ENCODE measurements at regions of chr3 and their contacts with region 1.

Region 1: GRCh38 chr3:132722164-132723024 is at the start of gene NPHP3:
- DNase-seq: peak; percentile 85
- H3K4me3 Mint-ChIP-seq: peak within 1 kb of the TSS; percentile 95
- H3K27ac Mint-ChIP-seq: peak within 1 kb of the TSS; percentile 91
- H3K4me1 Mint-ChIP-seq: peaks cover 36% of the 10 kb centered on the region
- H3K27me3 Mint-ChIP-seq: peaks cover 4% of the 10 kb centered on the region
- total RNA-seq, gene NPHP3: 14.4 and 17.0 TPM in 2 replicates

Region 2: DNA sequence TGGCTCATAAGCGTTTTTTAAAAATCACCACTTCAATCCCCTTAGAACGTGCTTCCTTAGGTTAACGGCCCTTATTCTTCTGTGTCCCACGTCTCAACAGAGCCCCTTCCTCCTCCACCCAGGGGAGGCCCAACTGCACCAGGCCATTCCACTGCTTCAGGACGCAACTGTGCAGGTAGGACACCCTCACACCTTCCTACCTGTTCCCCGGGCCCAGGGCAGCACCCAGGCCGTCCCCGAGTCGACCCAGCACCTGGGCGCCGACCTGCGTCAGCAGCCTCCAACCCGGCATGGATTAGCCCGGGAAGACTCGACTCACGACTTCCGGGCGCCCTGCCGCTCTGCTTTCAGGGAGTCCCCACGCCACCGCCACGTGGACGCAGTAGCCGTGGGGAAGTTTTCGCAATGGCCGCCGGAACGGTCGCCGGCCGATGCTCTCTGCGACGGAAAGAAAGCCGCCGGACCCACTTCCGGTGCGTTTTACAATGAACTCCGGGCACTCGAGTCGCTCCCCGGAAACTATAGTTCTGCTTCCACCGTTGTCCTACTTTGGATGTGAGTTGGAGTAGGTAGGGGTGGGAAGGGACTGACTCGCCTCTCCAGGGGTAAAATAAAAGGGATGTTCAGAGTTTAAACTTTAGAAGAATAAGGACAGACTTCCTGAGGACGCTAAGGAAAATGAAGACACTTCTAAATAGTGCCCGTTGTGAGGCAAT is 1219.7 kb before region 1 on chr3 and contains the start of gene MRPL3:
- intact Hi-C with region 1: loop called (anchors 2 kb)
- DNase-seq: peak; percentile 78
- H3K4me3 Mint-ChIP-seq: peak within 1 kb of the TSS; percentile 100
- H3K27ac Mint-ChIP-seq: peak within 1 kb of the TSS; percentile 95
- H3K4me1 Mint-ChIP-seq: peaks cover 50% of the 10 kb centered on the region
- H3K27me3 Mint-ChIP-seq: peaks cover 4% of the 10 kb centered on the region
- total RNA-seq, gene MRPL3: 166 and 175 TPM in 2 replicates

Region 3: DNA sequence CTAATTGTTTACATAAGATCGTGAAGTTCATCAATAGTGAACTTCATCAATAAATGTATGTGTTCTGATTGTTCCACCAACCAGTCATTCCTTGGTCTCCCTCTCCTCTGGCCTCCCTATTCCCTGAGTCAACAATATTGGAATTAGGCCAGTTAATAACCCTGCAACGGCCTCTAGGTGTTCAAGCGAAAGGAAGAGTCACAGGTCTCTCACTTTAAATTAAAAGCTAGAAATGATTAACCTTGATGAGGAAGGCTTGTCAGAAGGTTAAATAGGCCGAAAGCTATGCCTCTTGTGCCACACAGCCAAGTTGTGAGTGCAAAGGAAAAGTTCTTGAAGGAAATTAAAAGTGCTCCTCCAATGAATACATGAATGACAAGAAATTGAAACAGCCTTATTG is 214.7 kb before region 1 on chr3:
- intact Hi-C with region 1: no loop called
- DNase-seq: no peak
- H3K4me3 Mint-ChIP-seq: no peak overlapping the region
- H3K27ac Mint-ChIP-seq: no peak overlapping the region
- H3K4me1 Mint-ChIP-seq: no peaks in the 10 kb centered on the region
- H3K27me3 Mint-ChIP-seq: no peaks in the 10 kb centered on the region

Region 4: GRCh38 chr3:132535575-132536441 is 186.6 kb before region 1 on chr3:
- intact Hi-C with region 1: loop called (anchors 1 kb)
- DNase-seq: peak; percentile 17
- H3K4me3 Mint-ChIP-seq: no peak overlapping the region
- H3K27ac Mint-ChIP-seq: peak overlapping the region; percentile 86
- H3K4me1 Mint-ChIP-seq: peaks cover 22% of the 10 kb centered on the region
- H3K27me3 Mint-ChIP-seq: no peaks in the 10 kb centered on the region

Region 5: GRCh38 chr3:133211449-133211848 is 489.1 kb after region 1 on chr3:
- intact Hi-C with region 1: loop called (anchors 10 kb)
- DNase-seq: no peak
- H3K4me3 Mint-ChIP-seq: no peak overlapping the region
- H3K27ac Mint-ChIP-seq: no peak overlapping the region
- H3K4me1 Mint-ChIP-seq: peaks cover 21% of the 10 kb centered on the region
- H3K27me3 Mint-ChIP-seq: no peaks in the 10 kb centered on the region

Region 6: DNA sequence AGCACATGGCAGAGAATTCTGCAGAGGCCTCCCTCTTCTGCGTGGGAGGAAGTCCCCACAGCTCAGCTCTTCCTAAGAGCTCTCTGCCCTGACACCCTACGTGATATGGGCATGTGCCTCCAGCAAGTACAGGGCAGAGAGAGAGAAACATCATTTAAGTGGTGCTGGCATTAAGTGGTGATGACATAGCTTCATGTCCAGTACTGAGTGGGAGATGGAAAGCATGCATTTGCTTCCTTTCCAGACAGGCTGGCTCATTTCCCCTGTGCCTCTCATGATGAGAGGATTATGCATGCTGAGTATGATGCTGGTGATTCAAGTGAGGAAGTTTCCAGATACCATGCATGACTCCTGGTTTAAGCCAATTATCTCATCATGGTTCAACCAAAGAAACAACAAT is 704.3 kb after region 1 on chr3:
- intact Hi-C with region 1: loop called (anchors 1 kb)
- DNase-seq: no peak
- H3K4me3 Mint-ChIP-seq: no peak overlapping the region
- H3K27ac Mint-ChIP-seq: no peak overlapping the region
- H3K4me1 Mint-ChIP-seq: peaks cover 9% of the 10 kb centered on the region
- H3K27me3 Mint-ChIP-seq: peaks cover 8% of the 10 kb centered on the region

Region 7: DNA sequence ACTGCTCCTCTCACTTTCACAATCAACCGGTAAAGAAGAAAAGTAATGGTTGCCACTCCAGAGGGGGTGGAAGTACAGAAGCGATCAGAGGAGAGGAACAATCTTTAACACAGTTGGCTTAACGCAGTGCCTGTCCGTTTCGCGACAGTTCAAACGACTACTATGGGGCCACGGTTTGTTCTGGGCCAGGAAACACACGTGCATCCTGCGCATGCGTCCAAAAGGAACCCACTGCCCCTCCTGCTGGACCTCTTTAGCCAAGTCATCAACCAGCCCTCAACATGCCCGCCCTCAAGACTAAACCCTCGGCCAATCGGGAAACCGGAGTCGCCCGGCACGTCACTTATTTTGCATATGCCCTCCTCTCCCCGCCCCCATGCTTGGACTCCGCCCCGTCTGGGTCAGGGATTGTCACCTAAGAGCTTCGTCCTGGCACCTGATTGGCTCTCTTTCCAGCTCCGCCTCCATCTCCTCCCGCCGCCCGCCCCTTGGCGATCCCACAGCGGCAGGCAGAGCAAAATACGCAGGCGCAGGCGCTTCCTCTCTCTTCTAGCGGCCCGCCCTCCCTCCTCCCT is 850.7 kb after region 1 on chr3:
- intact Hi-C with region 1: loop called (anchors 1 kb)
- DNase-seq: peak; percentile 100
- H3K4me3 Mint-ChIP-seq: peak overlapping the region; percentile 84
- H3K27ac Mint-ChIP-seq: peak overlapping the region; percentile 98
- H3K4me1 Mint-ChIP-seq: peaks cover 60% of the 10 kb centered on the region
- H3K27me3 Mint-ChIP-seq: peaks cover 2% of the 10 kb centered on the region

Region 8: GRCh38 chr3:133927540-133928066 is 1205.2 kb after region 1 on chr3:
- intact Hi-C with region 1: loop called (anchors 5 kb)
- DNase-seq: peak; percentile 61
- H3K4me3 Mint-ChIP-seq: peak overlapping the region; percentile 46
- H3K27ac Mint-ChIP-seq: no peak overlapping the region
- H3K4me1 Mint-ChIP-seq: peaks cover 5% of the 10 kb centered on the region
- H3K27me3 Mint-ChIP-seq: peaks cover 30% of the 10 kb centered on the region